HCT116 (cell line): ENCODE measurements at regions of chr7 and their contacts with region 1.

Region 1: GRCh38 chr7:118300177-118300576 is 75.7 kb downstream of the ANKRD7 start:
- DNase-seq: no peak
- ATAC-seq: no peak
- H3K4me3 ChIP-seq: no peak overlapping the region
- H3K27ac ChIP-seq: no peak overlapping the region
- H3K4me1 ChIP-seq: no peaks in the 10 kb centered on the region
- H3K27me3 ChIP-seq: no peaks in the 10 kb centered on the region
- CTCF ChIP-seq: no peak
- POLR2A ChIP-seq: no peak
- RAD21 ChIP-seq: no peak

Region 2: GRCh38 chr7:117781702-117782101 is 518.5 kb before region 1 on chr7:
- CTCF ChIA-PET with region 1: no interaction called
- POLR2A ChIA-PET with region 1: no interaction called
- RAD21 ChIA-PET with region 1: no interaction called
- intact Hi-C with region 1: no loop called
- DNase-seq: no peak
- ATAC-seq: peak; percentile 49
- H3K4me3 ChIP-seq: no peak overlapping the region
- H3K27ac ChIP-seq: no peak overlapping the region
- H3K4me1 ChIP-seq: no peaks in the 10 kb centered on the region
- H3K27me3 ChIP-seq: no peaks in the 10 kb centered on the region
- CTCF ChIP-seq: 0 out of 6 replicates have a peak, but pooled peaks of 1 of the 3 experiments have one; percentile 7
- POLR2A ChIP-seq: no peak
- RAD21 ChIP-seq: no peak

Region 3: GRCh38 chr7:118324790-118325449 is 24.7 kb after region 1 on chr7:
- CTCF ChIA-PET with region 1: no interaction called
- POLR2A ChIA-PET with region 1: no interaction called
- RAD21 ChIA-PET with region 1: no interaction called
- intact Hi-C with region 1: loop called (anchors 1 kb)
- DNase-seq: no peak
- ATAC-seq: no peak
- H3K4me3 ChIP-seq: no peak overlapping the region
- H3K27ac ChIP-seq: no peak overlapping the region
- H3K4me1 ChIP-seq: no peaks in the 10 kb centered on the region
- H3K27me3 ChIP-seq: no peaks in the 10 kb centered on the region
- CTCF ChIP-seq: no peak
- POLR2A ChIP-seq: no peak
- RAD21 ChIP-seq: no peak